ENCODE measurements at regions of chr9 and their contacts with region 1.

Region 1: GRCh38 chr9:126781186-126782052 is 23.4 kb upstream of the ZBTB43 start:
- DNase-seq: peak; percentile 81 to 88
- ATAC-seq: peak; percentile 74 to 87 (median 82)
- H3K4me3 ChIP-seq: peak overlapping the region in 5 of 10 donors; percentile 6 to 27 (median 14)
- H3K27ac ChIP-seq: no peak overlapping the region
- H3K4me1 ChIP-seq: peaks cover 0 to 22% (median 6%) of the 10 kb centered on the region in 9 donors
- H3K27me3 ChIP-seq: peaks cover 0 to 54% (median 27%) of the 10 kb centered on the region in 7 donors
- CTCF ChIP-seq: peak; percentile 84 to 98 (median 96)

Region 2: DNA sequence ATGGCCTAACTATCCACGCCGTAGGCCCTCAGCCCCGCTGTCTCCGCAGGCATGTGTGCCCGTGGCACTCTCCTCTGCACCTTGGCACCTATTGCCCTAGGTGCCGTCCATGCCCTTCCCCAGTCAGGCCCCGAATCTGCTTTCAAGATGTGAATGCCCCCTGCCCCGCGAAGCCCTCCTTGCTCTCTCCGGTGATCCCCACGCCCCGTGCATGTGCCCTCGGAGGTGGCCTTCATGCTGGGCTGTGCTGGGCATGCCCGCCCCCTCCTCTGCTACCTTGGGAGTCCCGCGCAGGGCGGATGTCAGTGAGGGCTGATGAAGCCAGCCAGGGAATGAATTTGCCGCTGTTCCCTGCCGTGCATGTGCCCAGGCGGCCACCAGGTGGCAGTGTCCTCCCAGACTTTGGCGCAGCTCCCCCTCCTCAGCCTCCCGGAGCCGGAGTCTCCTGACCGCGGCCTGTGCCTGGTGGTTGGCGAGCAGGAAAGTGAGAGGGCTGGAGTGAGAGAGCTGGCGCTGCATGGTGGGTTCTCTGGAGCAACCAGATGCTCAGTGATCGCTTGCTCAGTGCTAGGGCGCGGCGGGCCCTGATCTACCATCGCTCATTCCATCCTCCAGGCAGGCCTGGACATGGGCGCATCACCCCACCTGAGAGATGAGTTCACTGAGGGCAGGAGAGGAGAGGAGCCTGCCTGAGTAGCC is 280.6 kb before region 1 on chr9:
- intact Hi-C with region 1: loop called (anchors 2 to 10 kb)
- DNase-seq: peak; percentile 74 to 79
- ATAC-seq: peak; percentile 65 to 88 (median 80)
- H3K4me3 ChIP-seq: no peak overlapping the region
- H3K27ac ChIP-seq: no peak overlapping the region
- H3K4me1 ChIP-seq: peaks cover 0 to 29% (median 22%) of the 10 kb centered on the region in 9 donors
- H3K27me3 ChIP-seq: peaks cover 0 to 14% (median 0%) of the 10 kb centered on the region in 7 donors
- CTCF ChIP-seq: peak; percentile 96 to 99 (median 97)

Region 3: GRCh38 chr9:126506361-126506941 is 275.0 kb before region 1 on chr9:
- intact Hi-C with region 1: loop called in 7 of 10 experiments (anchors 5 to 10 kb)
- DNase-seq: no peak
- ATAC-seq: no peak
- H3K4me3 ChIP-seq: no peak overlapping the region
- H3K27ac ChIP-seq: no peak overlapping the region
- H3K4me1 ChIP-seq: peaks cover 0 to under 1% (median 0%) of the 10 kb centered on the region in 9 donors
- H3K27me3 ChIP-seq: peaks cover 0 to 21% (median 14%) of the 10 kb centered on the region in 7 donors
- CTCF ChIP-seq: no peak

Region 4: GRCh38 chr9:126611592-126612325 is 169.7 kb before region 1 on chr9:
- intact Hi-C with region 1: loop called in 6 of 10 experiments (anchors 2 to 10 kb)
- DNase-seq: peak; percentile 71 to 82
- ATAC-seq: peak; percentile 68 to 89 (median 86)
- H3K4me3 ChIP-seq: peak overlapping the region in 9 of 10 donors; percentile 22 to 58 (median 51)
- H3K27ac ChIP-seq: peak overlapping the region in 2 of 10 donors; percentile 22 to 41
- H3K4me1 ChIP-seq: peaks cover 4 to 44% (median 38%) of the 10 kb centered on the region in 9 donors
- H3K27me3 ChIP-seq: peaks cover 42 to 95% (median 81%) of the 10 kb centered on the region in 7 donors
- CTCF ChIP-seq: peak; percentile 66 to 95 (median 88)

Region 5: DNA sequence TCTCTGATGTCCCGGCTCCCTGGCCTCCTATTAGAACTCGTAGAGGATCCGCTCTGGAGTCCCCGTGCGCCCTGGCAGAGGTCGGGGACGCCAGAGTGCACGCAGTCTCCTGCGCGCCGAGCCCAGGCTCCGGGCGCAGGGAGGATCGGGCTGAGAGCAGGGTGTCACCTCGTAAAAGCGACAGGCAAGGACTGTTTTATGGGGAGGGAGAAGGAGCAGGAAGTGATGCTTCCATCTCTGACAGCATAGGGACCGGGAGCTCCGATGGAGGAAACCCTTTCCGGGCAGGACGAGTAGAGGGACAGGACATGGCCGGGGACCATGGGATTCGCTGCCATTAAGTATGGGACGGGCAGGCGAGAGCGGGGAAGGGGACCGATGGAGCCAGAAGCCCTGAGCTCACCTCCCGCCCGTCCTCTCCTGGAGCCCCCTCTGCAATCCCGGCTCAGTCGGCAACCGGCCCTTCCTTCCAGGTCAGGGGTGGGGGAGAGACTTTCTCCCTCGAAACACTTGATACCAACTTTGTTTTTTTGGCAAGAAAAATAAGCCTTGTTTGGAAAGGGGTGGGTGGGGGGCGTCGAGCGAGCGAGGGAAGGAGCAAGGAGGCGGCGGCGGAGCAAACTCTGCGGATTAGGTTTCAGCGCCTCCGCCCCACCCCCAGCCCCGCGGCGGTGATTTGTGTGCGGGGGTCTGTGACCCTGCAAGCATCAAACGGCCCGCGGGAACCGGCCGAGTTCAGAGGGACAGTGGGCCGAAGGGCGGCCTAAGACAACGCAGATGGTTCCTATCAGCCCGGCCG is 155.1 kb before region 1 on chr9:
- intact Hi-C with region 1: loop called in 1 of 10 experiments (anchors 10 kb)
- DNase-seq: no peak
- ATAC-seq: peak in 6 of 8 donors; percentile 21 to 43 (median 28)
- H3K4me3 ChIP-seq: peak overlapping the region in 9 of 10 donors; percentile 16 to 53 (median 46)
- H3K27ac ChIP-seq: no peak overlapping the region
- H3K4me1 ChIP-seq: peaks cover 0 to 35% (median 22%) of the 10 kb centered on the region in 9 donors
- H3K27me3 ChIP-seq: peaks cover 24 to 100% (median 100%) of the 10 kb centered on the region in 7 donors
- CTCF ChIP-seq: no peak

Region 6: DNA sequence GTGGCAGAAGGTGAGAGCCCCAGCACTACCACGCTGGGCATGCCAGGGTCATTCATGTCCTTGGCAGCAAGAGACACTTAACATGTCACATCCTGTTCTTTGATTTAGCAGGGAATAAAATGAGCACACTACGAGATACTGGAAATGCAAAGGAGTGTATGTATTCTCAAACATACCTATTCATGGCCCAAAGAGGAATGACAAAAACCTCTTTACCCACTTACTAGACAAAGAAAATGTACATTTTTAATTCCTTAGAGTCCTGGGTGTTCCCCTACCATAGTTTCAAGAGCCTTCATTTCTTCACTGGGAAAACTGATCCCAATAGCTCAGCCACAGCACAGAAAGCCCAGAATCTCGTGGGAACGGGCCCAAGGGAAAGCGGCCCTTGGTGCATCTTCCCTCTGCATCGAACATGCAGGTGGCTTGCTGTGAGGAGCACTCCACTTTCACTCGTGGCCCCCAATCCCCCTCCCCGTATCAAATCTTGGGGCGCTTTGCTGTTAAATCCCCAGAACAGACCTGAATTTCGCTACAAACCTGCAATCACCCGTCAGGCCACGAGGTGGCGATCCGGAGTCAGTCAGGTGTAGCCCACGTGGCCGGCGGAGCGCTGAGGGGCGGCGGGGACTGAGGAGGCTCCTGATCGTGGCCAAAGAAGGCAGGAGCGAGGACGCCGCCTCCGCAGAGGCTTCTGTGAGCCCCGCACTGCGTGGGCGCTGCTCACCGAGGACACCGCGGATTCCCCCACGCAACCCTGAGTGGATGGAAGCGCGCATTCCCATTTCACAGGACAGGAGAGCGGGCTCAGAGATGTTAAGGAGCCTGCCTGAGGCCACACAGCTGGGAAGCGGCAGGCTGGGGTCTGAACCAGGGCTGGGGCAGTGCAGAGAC is 76.3 kb before region 1 on chr9:
- intact Hi-C with region 1: loop called (anchors 1 to 5 kb)
- DNase-seq: peak; percentile 68 to 78
- ATAC-seq: peak; percentile 57 to 88 (median 73)
- H3K4me3 ChIP-seq: peak overlapping the region in 7 of 10 donors; percentile 5 to 25 (median 15)
- H3K27ac ChIP-seq: no peak overlapping the region
- H3K4me1 ChIP-seq: peaks cover 6 to 16% (median 14%) of the 10 kb centered on the region in 9 donors
- H3K27me3 ChIP-seq: peaks cover 11 to 71% (median 58%) of the 10 kb centered on the region in 7 donors
- CTCF ChIP-seq: peak; percentile 75 to 90 (median 86)

Measured in heart right ventricle (tissue), 16 donors.